ENCODE measurements at regions of chr7 and their contacts with region 1.

Region 1: GRCh38 chr7:27921081-27921836 is 181.3 kb downstream of the TAX1BP1 start:
- DNase-seq: peak; percentile 78
- H3K4me3 Mint-ChIP-seq: no peak overlapping the region
- H3K27ac Mint-ChIP-seq: no peak overlapping the region
- H3K4me1 Mint-ChIP-seq: peaks cover 4% of the 10 kb centered on the region
- H3K27me3 Mint-ChIP-seq: no peaks in the 10 kb centered on the region

Region 2: DNA sequence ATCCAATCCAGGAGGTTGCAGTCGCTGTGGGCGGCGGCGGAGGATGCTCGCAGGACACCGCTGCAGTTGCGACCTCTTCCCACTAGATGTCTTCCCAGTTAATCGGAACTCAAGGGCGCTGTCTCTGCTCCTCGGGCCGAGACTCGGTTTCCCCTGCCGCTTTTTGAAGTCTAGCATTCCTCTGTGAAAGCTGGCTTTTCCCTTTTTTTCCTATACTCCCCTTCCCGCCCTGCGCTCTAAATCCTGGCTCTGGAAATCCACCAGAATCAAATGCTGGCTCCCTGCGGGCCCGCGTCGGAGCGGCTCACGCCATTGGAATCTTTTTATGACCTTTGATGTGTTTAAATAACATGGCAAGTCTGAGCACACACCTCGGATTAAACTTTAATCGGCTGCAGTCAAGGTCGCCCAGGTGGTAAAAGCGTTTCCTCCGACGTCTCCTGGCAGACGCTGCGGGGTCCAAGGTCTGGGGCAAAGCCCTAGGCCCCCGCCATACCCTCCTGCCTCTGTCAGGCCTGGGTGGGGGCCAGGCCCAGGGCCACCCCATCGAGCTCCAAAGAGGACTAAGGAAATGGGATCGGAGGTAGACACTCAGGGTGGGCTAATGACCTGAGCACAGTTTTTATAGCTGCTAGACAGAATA is 710.7 kb before region 1 on chr7:
- intact Hi-C with region 1: loop called (anchors 5 kb)
- DNase-seq: peak; percentile 81
- H3K4me3 Mint-ChIP-seq: no peak overlapping the region
- H3K27ac Mint-ChIP-seq: no peak overlapping the region
- H3K4me1 Mint-ChIP-seq: peaks cover 4% of the 10 kb centered on the region
- H3K27me3 Mint-ChIP-seq: peaks cover 90% of the 10 kb centered on the region

Region 3: GRCh38 chr7:27300421-27300820 is 620.8 kb before region 1 on chr7:
- intact Hi-C with region 1: no loop called
- DNase-seq: no peak
- H3K4me3 Mint-ChIP-seq: no peak overlapping the region
- H3K27ac Mint-ChIP-seq: no peak overlapping the region
- H3K4me1 Mint-ChIP-seq: no peaks in the 10 kb centered on the region
- H3K27me3 Mint-ChIP-seq: peaks cover 3% of the 10 kb centered on the region

Region 4: DNA sequence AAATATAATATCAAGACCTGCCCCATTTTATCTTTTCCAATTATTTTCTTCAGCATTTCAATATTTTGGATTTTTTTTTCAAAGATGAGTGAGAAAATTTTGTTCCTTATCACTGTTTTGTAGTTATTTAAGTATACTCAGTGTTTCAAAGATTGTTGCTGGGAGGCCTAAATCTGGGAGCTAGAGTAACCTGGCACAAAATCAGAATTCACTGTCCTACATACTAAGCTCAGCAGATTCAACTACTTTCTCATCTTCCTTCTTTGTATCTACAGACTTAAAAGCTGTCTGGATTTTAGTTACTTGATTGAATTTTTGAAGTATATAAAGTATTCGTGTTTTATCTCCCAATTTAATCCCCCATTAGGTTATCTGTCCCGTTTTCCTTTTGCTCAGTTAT is 95.4 kb before region 1 on chr7:
- intact Hi-C with region 1: no loop called
- DNase-seq: no peak
- H3K4me3 Mint-ChIP-seq: no peak overlapping the region
- H3K27ac Mint-ChIP-seq: no peak overlapping the region
- H3K4me1 Mint-ChIP-seq: no peaks in the 10 kb centered on the region
- H3K27me3 Mint-ChIP-seq: no peaks in the 10 kb centered on the region

Region 5: DNA sequence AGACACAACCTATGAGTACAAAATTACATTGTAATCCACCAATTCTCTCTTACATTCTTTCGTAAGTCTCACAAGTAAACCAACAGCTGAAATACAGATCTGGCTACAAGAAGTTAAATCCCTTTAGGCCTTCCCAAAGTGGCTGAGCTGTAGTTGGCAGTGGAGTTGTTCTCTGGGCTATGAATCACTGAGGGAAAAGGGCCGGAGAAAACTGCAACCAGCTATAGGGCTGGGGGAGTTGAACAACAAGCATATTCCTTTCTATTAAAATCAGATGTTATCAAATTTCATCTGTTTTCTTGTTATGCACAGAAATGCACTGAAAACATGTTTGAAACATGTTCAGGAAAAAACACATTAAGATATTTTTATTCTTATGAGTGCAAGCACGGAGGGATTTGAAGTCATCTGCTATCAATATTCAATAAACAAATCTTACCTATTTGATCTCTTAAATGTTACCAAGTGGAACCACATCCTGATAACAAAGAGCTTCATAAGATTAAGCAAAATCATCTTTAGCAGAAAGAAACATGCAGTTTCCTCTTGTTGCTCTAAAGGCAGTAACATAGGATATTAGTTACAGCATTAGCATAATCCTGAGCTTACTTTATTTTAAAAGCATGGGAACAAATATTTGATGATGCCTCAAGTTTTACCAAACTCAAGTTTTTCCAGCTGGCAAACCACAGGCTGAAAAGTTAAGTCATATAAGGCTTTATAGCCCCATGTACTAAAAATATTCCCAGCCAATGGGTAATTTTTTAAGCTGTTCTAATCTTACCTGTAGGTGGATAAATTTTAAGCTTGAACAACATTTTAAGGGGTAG is 31.4 kb after region 1 on chr7:
- intact Hi-C with region 1: no loop called
- DNase-seq: no peak
- H3K4me3 Mint-ChIP-seq: no peak overlapping the region
- H3K27ac Mint-ChIP-seq: no peak overlapping the region
- H3K4me1 Mint-ChIP-seq: peaks cover 4% of the 10 kb centered on the region
- H3K27me3 Mint-ChIP-seq: peaks cover 3% of the 10 kb centered on the region

Region 6: GRCh38 chr7:28020302-28020940 is 99.2 kb after region 1 on chr7:
- intact Hi-C with region 1: loop called (anchors 5 kb)
- DNase-seq: peak; percentile 83
- H3K4me3 Mint-ChIP-seq: no peak overlapping the region
- H3K27ac Mint-ChIP-seq: no peak overlapping the region
- H3K4me1 Mint-ChIP-seq: peaks cover 2% of the 10 kb centered on the region
- H3K27me3 Mint-ChIP-seq: peaks cover 9% of the 10 kb centered on the region

Measured in activated CD4-positive, alpha-beta T cell treated with anti-CD3 and anti-CD28 coated beads, Interleukin-2, amount 10 ng/mL, durations not matched to agents 24 days and 14 days (primary cell).